CD8-positive, alpha-beta T cell (primary cell): ENCODE measurements at regions of chr4 and their contacts with region 1.

Region 1: DNA sequence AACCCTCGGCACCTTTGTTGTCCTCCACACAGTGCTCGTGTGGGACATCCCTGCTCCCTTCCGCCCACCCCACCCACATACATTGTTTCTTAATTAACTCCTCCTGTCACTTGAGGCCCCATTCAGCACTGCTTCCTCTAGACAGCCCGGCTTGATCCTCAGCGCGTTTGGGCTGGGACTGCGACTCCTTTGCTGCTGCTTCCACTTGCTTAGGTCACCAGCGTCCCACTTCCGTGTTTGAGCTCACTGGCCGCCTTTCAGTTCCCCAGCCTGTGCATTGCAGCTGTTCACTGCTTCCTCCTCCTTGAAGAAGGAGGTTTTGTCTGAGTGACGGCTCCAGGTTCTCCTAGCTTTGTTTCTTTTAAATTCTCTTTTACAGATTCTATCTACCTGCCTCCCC is 16.1 kb downstream of the RNF4 start:
- DNase-seq: peak; percentile 37 to 85 (median 72)
- ATAC-seq: peak; percentile 90
- H3K4me3 ChIP-seq: peak overlapping the region; percentile 21 to 31
- H3K4me3 Mint-ChIP-seq: peak overlapping the region; percentile 70
- H3K27ac ChIP-seq: peak overlapping the region; percentile 11 to 66
- H3K27ac Mint-ChIP-seq: peak overlapping the region; percentile 84
- H3K4me1 ChIP-seq: peaks cover 72% of the 10 kb centered on the region
- H3K4me1 Mint-ChIP-seq: peaks cover 84% of the 10 kb centered on the region
- H3K27me3 ChIP-seq: no peaks in the 10 kb centered on the region
- H3K27me3 Mint-ChIP-seq: no peaks in the 10 kb centered on the region
- CTCF ChIP-seq: no peak

Region 2: DNA sequence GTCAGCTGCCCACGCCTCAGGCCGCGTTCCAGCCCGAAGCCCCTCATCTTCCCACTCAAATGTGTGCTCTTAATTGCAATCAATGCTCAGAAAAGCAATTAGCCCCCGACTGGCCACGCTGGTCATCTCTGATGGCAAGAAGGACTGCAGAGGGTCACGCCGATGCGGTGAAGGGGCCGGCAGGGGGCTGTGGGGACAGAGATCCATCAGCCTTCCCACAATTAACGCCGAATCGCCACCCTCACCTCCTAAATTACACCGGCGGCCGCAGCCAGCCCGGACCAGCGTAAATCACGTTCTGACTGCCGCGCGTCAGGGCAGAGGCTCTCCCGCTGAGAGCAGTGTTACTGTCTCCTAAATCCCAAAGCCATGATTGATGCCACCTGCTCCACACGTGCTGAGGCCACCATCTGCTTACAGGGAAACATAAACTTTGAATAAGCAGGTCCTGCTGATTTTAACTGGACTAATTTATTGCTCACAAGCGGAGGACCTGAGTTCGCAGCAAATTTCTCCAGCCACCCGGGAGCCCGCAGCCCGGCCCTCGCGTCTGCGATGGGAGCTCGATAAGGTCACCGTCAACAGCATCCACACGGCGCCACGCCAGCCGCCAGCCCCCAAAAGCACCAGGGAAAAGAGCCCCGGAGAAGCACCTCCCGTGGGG is 951.5 kb before region 1 on chr4:
- CTCF ChIA-PET with region 1: no interaction called
- POLR2A ChIA-PET with region 1: no interaction called
- intact Hi-C with region 1: no loop called
- DNase-seq: peak in 1 of 9 experiments; percentile 0
- ATAC-seq: no peak
- H3K4me3 ChIP-seq: no peak overlapping the region
- H3K4me3 Mint-ChIP-seq: no peak overlapping the region
- H3K27ac ChIP-seq: no peak overlapping the region
- H3K27ac Mint-ChIP-seq: no peak overlapping the region
- H3K4me1 ChIP-seq: no peaks in the 10 kb centered on the region
- H3K4me1 Mint-ChIP-seq: no peaks in the 10 kb centered on the region
- H3K27me3 ChIP-seq: peaks cover 0 to 4% of the 10 kb centered on the region in 2 experiments
- H3K27me3 Mint-ChIP-seq: peaks cover 15% of the 10 kb centered on the region
- CTCF ChIP-seq: no peak

Region 3: DNA sequence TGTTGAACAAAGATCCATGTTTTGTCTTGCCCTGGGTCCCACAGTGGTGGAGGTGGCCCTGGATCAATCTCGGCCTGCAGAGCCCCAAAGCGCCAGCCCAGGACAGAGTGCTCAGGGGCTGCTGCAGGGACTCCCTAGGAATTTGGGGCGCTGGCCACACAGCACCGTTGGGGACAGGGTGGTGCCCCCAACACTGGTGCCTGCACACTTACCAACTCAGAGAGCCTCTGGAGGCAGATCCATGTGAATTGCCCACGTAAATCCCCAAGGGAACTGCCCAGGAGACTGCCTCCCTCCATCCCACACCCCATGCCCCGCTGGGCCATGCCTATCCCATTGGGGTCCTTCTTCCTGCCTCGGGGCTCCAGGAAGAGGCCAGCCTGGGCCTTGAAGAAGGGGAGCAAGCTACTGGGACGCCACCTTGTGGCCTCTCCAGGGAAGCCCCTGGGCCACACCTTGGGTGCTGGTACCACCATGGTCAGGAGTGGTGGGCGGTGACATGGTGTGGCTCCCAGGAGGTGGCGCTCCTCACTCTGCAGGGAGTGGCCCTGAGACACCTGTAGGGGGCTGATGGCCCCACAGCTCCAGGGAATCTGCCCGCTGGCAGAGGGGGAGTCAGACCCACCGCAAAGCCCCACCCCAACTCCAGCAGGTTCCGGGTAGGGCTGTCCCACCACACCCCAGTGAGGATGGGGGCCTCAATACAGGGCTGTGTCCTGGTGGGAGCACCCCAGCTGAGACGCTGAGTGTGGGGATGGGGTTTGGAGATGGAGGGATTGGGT is 43.4 kb before region 1 on chr4:
- CTCF ChIA-PET with region 1: no interaction called
- POLR2A ChIA-PET with region 1: no interaction called
- intact Hi-C with region 1: no loop called
- DNase-seq: peak; percentile 44 to 86 (median 76)
- ATAC-seq: peak; percentile 100
- H3K4me3 ChIP-seq: no peak overlapping the region
- H3K4me3 Mint-ChIP-seq: no peak overlapping the region
- H3K27ac ChIP-seq: no peak overlapping the region
- H3K27ac Mint-ChIP-seq: no peak overlapping the region
- H3K4me1 ChIP-seq: peaks cover 8% of the 10 kb centered on the region
- H3K4me1 Mint-ChIP-seq: peaks cover 2% of the 10 kb centered on the region
- H3K27me3 ChIP-seq: no peaks in the 10 kb centered on the region
- H3K27me3 Mint-ChIP-seq: no peaks in the 10 kb centered on the region
- CTCF ChIP-seq: peak; percentile 82

Region 4: DNA sequence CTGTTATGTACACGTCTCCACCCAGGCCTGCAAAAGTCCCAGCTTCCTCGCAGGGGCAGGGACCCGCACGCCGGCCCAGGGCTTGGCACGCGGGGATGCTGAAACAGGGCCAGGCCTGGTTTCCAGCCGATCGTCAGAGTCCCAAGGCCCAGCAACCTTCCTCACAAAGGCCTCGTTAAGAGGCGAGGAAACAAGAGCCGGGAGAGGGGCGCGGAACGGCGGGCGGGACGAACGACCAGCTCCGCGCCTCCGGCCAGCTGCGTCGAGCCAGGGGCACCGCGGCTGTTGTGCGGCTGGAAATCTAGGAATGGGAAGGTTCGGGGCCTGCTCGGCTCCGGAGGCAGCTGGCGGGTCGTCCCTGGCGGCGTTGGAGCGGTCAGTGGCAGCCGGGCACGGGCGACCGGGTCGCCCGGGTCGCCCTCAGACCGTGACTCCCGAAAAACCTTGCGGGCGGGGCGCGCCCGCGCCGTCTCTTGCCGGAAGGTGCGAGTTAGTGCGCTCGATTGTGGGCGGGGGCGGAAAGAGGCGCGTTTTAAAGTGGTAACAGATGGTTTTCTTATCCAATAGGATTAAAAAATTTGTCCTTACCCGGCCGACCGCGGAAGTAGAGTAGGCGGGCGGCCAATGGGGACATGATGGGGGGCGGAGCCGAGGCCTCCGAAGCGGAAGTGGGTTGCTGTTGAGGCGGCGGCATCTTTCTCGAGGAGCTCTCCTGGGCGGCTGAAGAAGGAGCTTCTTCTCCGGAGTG is 16.4 kb before region 1 on chr4 and contains the start of gene RNF4:
- CTCF ChIA-PET with region 1: interaction called, 5 read pairs
- POLR2A ChIA-PET with region 1: interaction called, 45 read pairs
- intact Hi-C with region 1: loop called (anchors 1 to 2 kb)
- DNase-seq: peak; percentile 90 to 98 (median 94)
- ATAC-seq: peak; percentile 82
- H3K4me3 ChIP-seq: peak within 1 kb of the TSS; percentile 54 to 91
- H3K4me3 Mint-ChIP-seq: peak within 1 kb of the TSS; percentile 96
- H3K27ac ChIP-seq: peak within 1 kb of the TSS; percentile 95 to 97
- H3K27ac Mint-ChIP-seq: peak within 1 kb of the TSS; percentile 98
- H3K4me1 ChIP-seq: peaks cover 42% of the 10 kb centered on the region
- H3K4me1 Mint-ChIP-seq: peaks cover 45% of the 10 kb centered on the region
- H3K27me3 ChIP-seq: no peaks in the 10 kb centered on the region
- H3K27me3 Mint-ChIP-seq: no peaks in the 10 kb centered on the region
- CTCF ChIP-seq: no peak
- total RNA-seq, gene RNF4: 130 to 134 TPM